ENCODE measurements at regions of chr3 and their contacts with region 1.

Region 1: GRCh38 chr3:47705391-47705790 is 76.3 kb downstream of the SMARCC1 start:
- DNase-seq: no peak
- H3K4me3 Mint-ChIP-seq: no peak overlapping the region
- H3K27ac Mint-ChIP-seq: no peak overlapping the region
- H3K4me1 Mint-ChIP-seq: no peaks in the 10 kb centered on the region
- H3K27me3 Mint-ChIP-seq: no peaks in the 10 kb centered on the region

Region 2: DNA sequence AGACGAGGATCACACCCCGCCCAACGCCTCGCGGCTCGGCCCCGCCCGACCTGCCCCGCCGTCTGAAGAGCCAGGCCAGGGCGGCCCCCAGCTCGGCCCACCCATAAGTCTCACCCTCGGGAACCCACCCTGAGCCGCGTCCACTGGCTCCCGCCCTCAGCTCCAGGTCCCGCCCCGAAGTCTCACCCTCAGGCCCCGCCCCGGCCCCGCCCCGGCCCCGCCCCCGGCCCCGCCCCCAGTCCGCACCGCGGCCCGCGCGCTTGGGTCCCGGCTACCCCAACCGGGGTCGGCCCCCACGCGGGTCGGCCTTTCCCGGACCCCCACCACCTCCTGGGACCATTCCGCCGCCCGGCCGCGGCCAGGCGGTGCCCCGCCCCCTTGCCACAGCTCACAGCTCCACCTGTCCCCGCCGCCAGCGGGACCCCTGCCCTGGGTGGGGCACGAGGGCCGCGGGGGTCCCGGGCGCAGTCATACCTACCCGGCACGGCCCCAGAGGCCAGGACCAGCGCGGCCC is 127.2 kb before region 1 on chr3:
- intact Hi-C with region 1: no loop called
- DNase-seq: peak; percentile 87
- H3K4me3 Mint-ChIP-seq: peak overlapping the region; percentile 73
- H3K27ac Mint-ChIP-seq: no peak overlapping the region
- H3K4me1 Mint-ChIP-seq: no peaks in the 10 kb centered on the region
- H3K27me3 Mint-ChIP-seq: peaks cover 34% of the 10 kb centered on the region

Region 3: GRCh38 chr3:47722859-47723258 is 17.5 kb after region 1 on chr3:
- intact Hi-C with region 1: loop called (anchors 1 kb)
- DNase-seq: peak; percentile 50
- H3K4me3 Mint-ChIP-seq: no peak overlapping the region
- H3K27ac Mint-ChIP-seq: peak overlapping the region; percentile 3
- H3K4me1 Mint-ChIP-seq: peaks cover 8% of the 10 kb centered on the region
- H3K27me3 Mint-ChIP-seq: no peaks in the 10 kb centered on the region

Region 4: DNA sequence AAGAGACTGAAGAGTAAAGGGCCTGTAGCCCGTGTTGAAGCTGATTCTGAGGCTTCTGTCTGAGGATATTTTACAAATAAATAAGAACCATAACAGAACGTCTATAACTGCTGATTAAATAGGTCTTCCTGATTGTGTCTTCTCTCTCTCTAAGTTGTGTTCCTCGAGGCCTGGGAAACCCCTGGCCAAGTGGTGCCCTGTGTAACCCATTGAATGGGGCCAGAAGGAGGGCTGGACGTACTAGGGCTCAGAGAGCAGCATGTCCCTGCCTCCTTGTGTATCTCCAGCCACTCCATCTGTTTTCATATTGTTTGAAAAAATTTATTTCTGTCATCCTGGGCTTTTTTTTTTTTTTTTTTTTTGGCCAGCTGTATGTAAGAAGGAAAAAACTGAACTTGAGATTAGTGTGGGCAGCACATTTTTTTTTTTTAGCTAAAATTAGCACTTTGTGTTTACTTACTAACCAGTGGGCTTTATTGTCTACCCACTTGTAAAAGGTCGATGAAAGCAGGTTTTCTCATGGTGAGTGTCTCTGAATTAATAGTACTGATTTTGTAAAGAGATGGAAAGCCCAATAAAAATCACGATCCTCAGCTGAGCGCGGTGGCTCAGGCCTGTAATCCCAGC is 108.3 kb after region 1 on chr3:
- intact Hi-C with region 1: no loop called
- DNase-seq: no peak
- H3K4me3 Mint-ChIP-seq: no peak overlapping the region
- H3K27ac Mint-ChIP-seq: no peak overlapping the region
- H3K4me1 Mint-ChIP-seq: peaks cover 2% of the 10 kb centered on the region
- H3K27me3 Mint-ChIP-seq: no peaks in the 10 kb centered on the region